ENCODE measurements at regions of chr4 and their contacts with region 1.

Region 1: DNA sequence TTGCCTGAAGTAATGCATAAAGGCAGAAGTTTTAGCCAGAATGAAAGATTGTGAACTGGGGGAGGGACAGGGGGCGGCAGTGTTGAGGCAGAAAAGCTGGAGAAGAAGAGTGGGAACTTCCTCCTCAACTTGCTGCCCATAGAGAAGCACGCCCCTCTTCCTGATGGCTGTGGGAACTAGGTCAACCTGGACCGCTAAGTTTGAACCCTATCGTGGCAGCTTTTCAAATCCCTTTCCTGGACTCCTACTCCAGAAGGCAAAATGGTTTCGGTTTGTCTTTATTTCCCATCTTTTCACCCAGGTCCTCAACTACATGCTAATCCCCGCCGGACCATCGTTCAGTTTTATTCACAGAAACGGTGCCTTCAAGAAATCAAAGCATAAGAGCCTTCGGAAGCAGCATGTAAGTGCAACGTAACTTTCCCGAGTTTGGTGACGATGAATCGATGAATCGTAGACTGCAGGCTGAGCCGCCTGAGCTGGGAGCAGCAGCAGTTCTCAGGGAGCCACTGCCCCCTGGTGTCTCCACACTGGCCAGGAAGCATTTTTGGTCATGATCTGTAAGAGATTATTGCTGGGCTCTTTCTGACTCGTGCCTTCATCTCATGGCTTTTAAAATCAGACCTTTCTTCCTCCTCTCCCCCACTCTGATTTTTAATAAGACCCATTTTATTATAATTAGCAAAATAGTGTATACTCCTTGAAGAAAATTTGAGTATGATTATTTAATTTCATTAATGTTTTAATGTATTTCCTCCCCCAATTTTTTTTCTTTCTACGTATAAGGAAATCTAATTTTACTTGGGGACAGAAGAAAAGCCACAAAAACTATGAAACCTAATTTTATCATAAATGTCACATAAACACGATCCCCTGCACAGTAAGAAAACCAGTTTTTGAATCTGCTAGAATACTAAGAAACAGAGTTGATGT is 21.4 kb downstream of the SPINK2 start:
- DNase-seq: peak; percentile 74 to 85 (median 81)
- H3K4me3 ChIP-seq: peak overlapping the region; percentile 57
- H3K27ac ChIP-seq: peak overlapping the region in 1 of 2 donors; percentile 61
- H3K4me1 ChIP-seq: no peaks in the 10 kb centered on the region
- H3K27me3 ChIP-seq: no peaks in the 10 kb centered on the region
- CTCF ChIP-seq: peak; percentile 68 to 74 (median 73)
- EP300 ChIP-seq: no peak
- POLR2A ChIP-seq: no peak

Region 2: DNA sequence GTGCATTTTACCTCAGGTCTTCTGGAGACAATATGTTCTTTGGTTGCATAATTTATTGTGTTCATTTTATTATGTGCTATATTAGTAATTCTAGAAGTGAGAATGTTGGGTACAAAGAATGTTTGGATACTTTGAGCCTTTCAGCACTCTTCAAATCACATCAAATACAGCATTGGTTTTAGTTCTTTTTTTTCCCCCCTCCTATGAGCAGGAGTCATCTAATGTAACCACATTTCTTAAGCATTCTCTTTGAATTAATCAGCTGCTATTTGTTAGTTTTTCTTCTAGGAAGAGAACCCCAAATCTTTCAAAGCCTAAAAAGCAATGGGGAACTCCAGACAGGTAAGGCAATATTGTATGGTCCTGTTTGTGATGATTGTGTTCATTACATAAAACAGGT is 247.8 kb before region 1 on chr4:
- intact Hi-C with region 1: loop called in 1 of 4 experiments (anchors 10 kb)
- DNase-seq: no peak
- H3K4me3 ChIP-seq: no peak overlapping the region
- H3K27ac ChIP-seq: no peak overlapping the region
- H3K4me1 ChIP-seq: no peaks in the 10 kb centered on the region
- H3K27me3 ChIP-seq: no peaks in the 10 kb centered on the region
- CTCF ChIP-seq: no peak
- EP300 ChIP-seq: no peak
- POLR2A ChIP-seq: no peak

Region 3: GRCh38 chr4:56575820-56576429 is 224.2 kb before region 1 on chr4:
- intact Hi-C with region 1: loop called in 1 of 4 experiments (anchors 5 kb)
- DNase-seq: no peak
- H3K4me3 ChIP-seq: no peak overlapping the region
- H3K27ac ChIP-seq: no peak overlapping the region
- H3K4me1 ChIP-seq: no peaks in the 10 kb centered on the region
- H3K27me3 ChIP-seq: no peaks in the 10 kb centered on the region
- CTCF ChIP-seq: no peak
- EP300 ChIP-seq: no peak
- POLR2A ChIP-seq: no peak

Measured in ovary (tissue), 10 donors.